Breast epithelium (tissue), 4 donors: ENCODE measurements at regions of chr1 and their contacts with region 1.

Region 1: DNA sequence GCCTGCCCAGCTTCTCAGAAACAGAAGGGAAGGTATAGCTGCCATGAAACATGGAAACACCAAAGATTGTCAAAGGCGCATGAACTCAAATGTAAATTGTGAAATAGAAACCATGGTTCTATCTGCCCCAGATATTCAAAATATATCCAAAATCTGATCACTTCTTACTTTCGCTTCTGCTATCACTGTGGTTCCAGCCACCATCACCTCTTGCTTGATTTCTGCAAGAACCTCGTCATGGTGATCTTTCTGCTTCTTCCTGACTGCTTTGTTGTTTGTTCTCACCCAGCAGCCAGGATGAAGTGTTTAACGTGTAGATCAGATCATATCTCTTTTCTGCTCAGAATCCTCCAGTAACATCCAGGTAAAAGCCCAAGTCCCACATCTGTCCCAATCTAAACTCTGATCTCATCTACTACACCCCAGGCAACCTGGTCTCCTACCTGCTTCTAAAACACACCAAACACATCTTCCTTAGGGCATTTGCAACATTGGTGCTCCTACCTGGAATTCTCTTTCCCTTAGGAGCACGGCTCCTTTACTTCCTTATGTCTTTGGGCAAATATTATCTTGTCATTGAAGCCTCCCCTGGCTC is 10.5 kb upstream of the LMO4 start:
- DNase-seq: no peak
- H3K4me3 ChIP-seq: no peak overlapping the region
- H3K27ac ChIP-seq: no peak overlapping the region
- H3K4me1 ChIP-seq: no peaks in the 10 kb centered on the region
- H3K27me3 ChIP-seq: no peaks in the 10 kb centered on the region
- CTCF ChIP-seq: no peak
- POLR2A ChIP-seq: no peak

Region 2: GRCh38 chr1:87226341-87226760 is 91.8 kb before region 1 on chr1:
- intact Hi-C with region 1: no loop called
- DNase-seq: peak; percentile 68 to 82
- H3K4me3 ChIP-seq: peak overlapping the region in 1 of 3 donors; percentile 2
- H3K27ac ChIP-seq: peak overlapping the region; percentile 56
- H3K4me1 ChIP-seq: no peaks in the 10 kb centered on the region
- H3K27me3 ChIP-seq: no peaks in the 10 kb centered on the region
- CTCF ChIP-seq: no peak
- POLR2A ChIP-seq: no peak

Region 3: GRCh38 chr1:87968197-87968955 is 650.2 kb after region 1 on chr1:
- intact Hi-C with region 1: loop called (anchors 10 kb)
- DNase-seq: no peak
- H3K4me3 ChIP-seq: no peak overlapping the region
- H3K27ac ChIP-seq: peak overlapping the region; percentile 29 to 54
- H3K4me1 ChIP-seq: peaks cover 0 to 8% of the 10 kb centered on the region in 2 donors
- H3K27me3 ChIP-seq: no peaks in the 10 kb centered on the region
- CTCF ChIP-seq: no peak
- POLR2A ChIP-seq: no peak